ENCODE measurements at regions of chr1 and their contacts with region 1.

Region 1: GRCh38 chr1:214439352-214440119 is 111.9 kb downstream of the PTPN14 start:
- DNase-seq: peak; percentile 60
- ATAC-seq: peak; percentile 85
- H3K4me3 ChIP-seq: peak overlapping the region; percentile 0; the same call in 1 of the 2 replicates
- H3K27ac ChIP-seq: peak overlapping the region; percentile 43
- H3K4me1 ChIP-seq: peaks cover 12% of the 10 kb centered on the region
- H3K27me3 ChIP-seq: no peaks in the 10 kb centered on the region
- CTCF ChIP-seq: no peak
- EP300 ChIP-seq: peak; percentile 77 to 83; a peak in 3 of 4 replicates
- POLR2A ChIP-seq: 0 out of 2 replicates have a peak, but pooled peaks have one; percentile 47
- RAD21 ChIP-seq: no peak

Region 2: GRCh38 chr1:214404154-214404553 is 35.4 kb before region 1 on chr1:
- CTCF ChIA-PET with region 1: interaction called, 3 read pairs
- POLR2A ChIA-PET with region 1: interaction called, 8 read pairs
- RAD21 ChIA-PET with region 1: interaction called, 23 read pairs
- SMC1A ChIA-PET with region 1: interaction called, 15 read pairs
- in situ Hi-C with region 1: no loop called
- intact Hi-C with region 1: no loop called
- DNase-seq: peak; percentile 12
- ATAC-seq: peak; percentile 84
- H3K4me3 ChIP-seq: no peak overlapping the region
- H3K27ac ChIP-seq: no peak overlapping the region
- H3K4me1 ChIP-seq: no peaks in the 10 kb centered on the region
- H3K27me3 ChIP-seq: no peaks in the 10 kb centered on the region
- CTCF ChIP-seq: no peak
- EP300 ChIP-seq: peak; percentile 59 to 63; a peak in 2 of 4 replicates
- POLR2A ChIP-seq: no peak
- RAD21 ChIP-seq: no peak

Region 3: GRCh38 chr1:214422137-214422671 is 17.3 kb before region 1 on chr1:
- CTCF ChIA-PET with region 1: interaction called, 4 read pairs
- POLR2A ChIA-PET with region 1: interaction called, 8 read pairs
- RAD21 ChIA-PET with region 1: interaction called, 15 read pairs
- SMC1A ChIA-PET with region 1: interaction called, 27 read pairs
- in situ Hi-C with region 1: no loop called
- intact Hi-C with region 1: no loop called
- DNase-seq: no peak
- ATAC-seq: no peak
- H3K4me3 ChIP-seq: no peak overlapping the region
- H3K27ac ChIP-seq: no peak overlapping the region
- H3K4me1 ChIP-seq: no peaks in the 10 kb centered on the region
- H3K27me3 ChIP-seq: no peaks in the 10 kb centered on the region
- CTCF ChIP-seq: no peak
- EP300 ChIP-seq: no peak
- POLR2A ChIP-seq: no peak
- RAD21 ChIP-seq: no peak

Region 4: DNA sequence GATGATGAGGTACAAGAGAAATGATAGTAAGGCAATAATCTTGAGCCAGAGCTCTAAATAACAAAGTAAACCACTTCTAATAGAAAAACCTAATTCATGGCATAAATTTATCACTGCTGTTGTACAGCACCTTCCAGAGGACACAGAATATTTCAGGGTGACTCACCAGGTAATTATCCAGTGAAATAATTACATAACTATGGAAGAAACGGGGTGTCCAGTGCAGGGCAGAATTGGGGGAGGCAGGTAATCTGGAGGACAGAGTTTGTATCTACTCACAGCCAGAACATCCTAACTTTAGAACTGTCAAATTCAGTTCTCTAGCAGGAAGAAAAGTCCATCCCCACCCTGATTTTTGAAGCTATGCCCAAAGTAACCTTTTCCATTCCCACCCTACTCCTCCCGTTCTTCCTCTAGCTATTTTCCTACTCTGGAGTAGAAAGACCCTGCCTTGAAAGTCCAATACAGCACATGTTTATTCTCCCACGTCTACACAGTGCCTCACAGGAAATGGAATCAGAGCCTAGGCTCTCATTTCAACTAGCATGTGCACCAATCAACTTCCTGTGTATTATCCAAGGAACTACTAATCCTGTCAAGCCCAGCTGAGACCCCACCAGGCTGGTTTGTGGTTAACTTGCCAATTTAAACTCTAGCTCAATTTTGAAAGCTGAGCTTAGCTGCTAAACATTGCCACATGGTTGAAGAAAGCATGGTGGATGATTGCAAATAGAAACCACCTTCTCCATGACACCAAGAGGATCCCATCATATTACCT is 15.3 kb after region 1 on chr1:
- CTCF ChIA-PET with region 1: interaction called, 4 read pairs
- POLR2A ChIA-PET with region 1: interaction called, 4 read pairs
- RAD21 ChIA-PET with region 1: interaction called, 6 read pairs
- SMC1A ChIA-PET with region 1: interaction called, 37 read pairs
- in situ Hi-C with region 1: no loop called
- intact Hi-C with region 1: no loop called
- DNase-seq: no peak
- ATAC-seq: peak; percentile 24; the same call in 1 of the 3 replicates
- H3K4me3 ChIP-seq: no peak overlapping the region
- H3K27ac ChIP-seq: no peak overlapping the region
- H3K4me1 ChIP-seq: no peaks in the 10 kb centered on the region
- H3K27me3 ChIP-seq: no peaks in the 10 kb centered on the region
- CTCF ChIP-seq: no peak
- EP300 ChIP-seq: no peak
- POLR2A ChIP-seq: no peak
- RAD21 ChIP-seq: no peak

Region 5: GRCh38 chr1:214476958-214477870 is 37.7 kb after region 1 on chr1:
- CTCF ChIA-PET with region 1: interaction called, 3 read pairs
- POLR2A ChIA-PET with region 1: interaction called, 3 read pairs
- RAD21 ChIA-PET with region 1: interaction called, 9 read pairs
- SMC1A ChIA-PET with region 1: interaction called, 30 read pairs
- in situ Hi-C with region 1: no loop called
- intact Hi-C with region 1: no loop called
- DNase-seq: no peak
- ATAC-seq: peak; percentile 74
- H3K4me3 ChIP-seq: no peak overlapping the region
- H3K27ac ChIP-seq: no peak overlapping the region
- H3K4me1 ChIP-seq: no peaks in the 10 kb centered on the region
- H3K27me3 ChIP-seq: no peaks in the 10 kb centered on the region
- CTCF ChIP-seq: no peak
- EP300 ChIP-seq: no peak
- POLR2A ChIP-seq: no peak
- RAD21 ChIP-seq: no peak

Region 6: DNA sequence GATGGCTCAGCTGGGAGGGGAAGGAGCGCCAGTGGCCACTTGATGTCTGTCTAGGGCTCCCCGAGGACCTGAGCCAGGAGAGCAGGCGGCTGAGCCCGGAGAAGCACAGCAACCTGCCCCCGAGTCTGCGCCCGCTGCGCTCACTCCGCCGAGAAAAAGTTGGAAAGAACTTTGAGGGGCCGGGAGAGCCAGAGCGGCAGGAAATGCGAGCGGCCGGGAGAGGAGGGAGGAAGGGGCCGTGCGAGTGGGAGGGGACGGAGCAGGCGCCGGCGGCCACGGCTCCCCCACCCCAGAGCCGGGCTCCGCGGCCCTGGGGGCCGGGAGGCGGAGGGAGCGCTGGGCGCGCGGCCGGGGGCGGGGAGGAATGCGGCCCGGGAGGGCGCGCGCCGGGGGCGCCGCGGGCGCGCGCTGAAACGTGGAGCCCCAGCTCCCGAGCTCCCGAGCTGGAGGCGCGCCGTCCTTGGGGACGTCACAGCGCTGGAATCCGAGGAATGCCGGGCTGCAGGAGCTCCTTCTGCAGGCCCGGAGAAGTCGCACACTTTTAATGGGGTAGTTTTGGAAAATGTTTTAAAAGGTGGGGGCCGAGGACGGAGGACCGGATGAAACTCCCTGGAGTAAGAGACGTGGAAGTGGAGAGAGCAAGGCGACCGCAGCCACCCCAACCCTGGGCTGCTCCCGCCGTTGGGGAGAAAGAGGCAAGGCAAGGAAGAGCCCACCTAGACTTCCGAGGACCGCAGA is 112.1 kb after region 1 on chr1 and contains the start of gene PTPN14:
- CTCF ChIA-PET with region 1: interaction called, 7 read pairs
- POLR2A ChIA-PET with region 1: interaction called, 4 read pairs
- RAD21 ChIA-PET with region 1: interaction called, 7 read pairs
- SMC1A ChIA-PET with region 1: interaction called, 13 read pairs
- in situ Hi-C with region 1: no loop called
- intact Hi-C with region 1: loop called (anchors 5 kb)
- DNase-seq: no peak
- ATAC-seq: peak; percentile 44
- H3K4me3 ChIP-seq: no peak within 1 kb of the TSS
- H3K27ac ChIP-seq: no peak within 1 kb of the TSS
- H3K4me1 ChIP-seq: no peaks in the 10 kb centered on the region
- H3K27me3 ChIP-seq: peaks cover 3 to 7% of the 10 kb centered on the region in 2 experiments; a peak in 3 of 4 replicates
- CTCF ChIP-seq: no peak
- EP300 ChIP-seq: no peak
- POLR2A ChIP-seq: no peak
- RAD21 ChIP-seq: no peak
- polyA plus RNA-seq, gene PTPN14: 0.05 to 0.14 TPM